Mammary epithelial cell (primary cell): ENCODE measurements at regions of chr4 and their contacts with region 1.

Region 1: GRCh38 chr4:56613101-56613862 is 67.8 kb downstream of the HOPX start:
- DNase-seq: peak; percentile 72
- H3K4me3 ChIP-seq: no peak overlapping the region
- H3K27ac ChIP-seq: peak overlapping the region; percentile 84
- H3K4me1 ChIP-seq: peaks cover 14% of the 10 kb centered on the region
- H3K27me3 ChIP-seq: no peaks in the 10 kb centered on the region
- CTCF ChIP-seq: no peak

Region 2: GRCh38 chr4:56637791-56638190 is 24.5 kb after region 1 on chr4:
- CTCF ChIA-PET with region 1: no interaction called
- dilution Hi-C with region 1: no loop called
- in situ Hi-C with region 1: no loop called
- intact Hi-C with region 1: loop called (anchors 2 kb)
- DNase-seq: no peak
- H3K4me3 ChIP-seq: no peak overlapping the region
- H3K27ac ChIP-seq: peak overlapping the region; percentile 17
- H3K4me1 ChIP-seq: peaks cover 41% of the 10 kb centered on the region
- H3K27me3 ChIP-seq: no peaks in the 10 kb centered on the region
- CTCF ChIP-seq: no peak

Region 3: DNA sequence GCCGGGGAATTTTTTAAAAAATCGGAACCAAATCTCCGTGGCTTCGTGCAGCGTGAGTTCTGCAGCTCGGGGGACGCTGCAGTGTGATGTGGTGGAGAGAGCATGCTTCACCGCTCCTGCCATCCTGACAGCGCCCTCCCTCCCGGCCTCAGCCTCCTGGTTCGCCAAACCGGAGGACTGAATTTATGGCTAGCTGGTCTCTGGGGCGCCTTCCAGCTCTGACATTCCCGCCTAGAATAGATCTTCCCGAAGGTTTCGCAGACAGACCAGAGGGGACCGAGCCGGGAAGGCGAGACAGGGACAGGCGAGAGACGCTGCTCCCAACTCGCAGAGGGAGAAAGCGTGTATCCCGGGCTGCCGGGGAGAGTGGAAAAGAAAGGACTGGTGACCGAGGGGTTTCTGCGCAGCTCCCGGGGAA is 41.9 kb after region 1 on chr4:
- CTCF ChIA-PET with region 1: no interaction called
- dilution Hi-C with region 1: no loop called
- in situ Hi-C with region 1: no loop called
- intact Hi-C with region 1: loop called (anchors 5 kb)
- DNase-seq: no peak
- H3K4me3 ChIP-seq: peak overlapping the region; percentile 28 to 55 (median 55)
- H3K27ac ChIP-seq: no peak overlapping the region
- H3K4me1 ChIP-seq: peaks cover 25% of the 10 kb centered on the region
- H3K27me3 ChIP-seq: peaks cover 33% of the 10 kb centered on the region
- CTCF ChIP-seq: no peak